Naive thymus-derived CD4-positive, alpha-beta T cell (primary cell): ENCODE measurements at regions of chr13 and their contacts with region 1.

Region 1: GRCh38 chr13:41222259-41222852 is 28.0 kb upstream of the KBTBD7 start:
- DNase-seq: peak in 8 of 9 donors; percentile 32 to 61 (median 53)
- ATAC-seq: peak; percentile 94
- H3K4me3 ChIP-seq: no peak overlapping the region
- H3K4me3 Mint-ChIP-seq: no peak overlapping the region
- H3K27ac ChIP-seq: no peak overlapping the region
- H3K27ac Mint-ChIP-seq: no peak overlapping the region
- H3K4me1 ChIP-seq: no peaks in the 10 kb centered on the region
- H3K4me1 Mint-ChIP-seq: peaks cover 0 to 4% (median 0%) of the 10 kb centered on the region in 7 donors
- H3K27me3 ChIP-seq: no peaks in the 10 kb centered on the region
- H3K27me3 Mint-ChIP-seq: no peaks in the 10 kb centered on the region

Region 2: DNA sequence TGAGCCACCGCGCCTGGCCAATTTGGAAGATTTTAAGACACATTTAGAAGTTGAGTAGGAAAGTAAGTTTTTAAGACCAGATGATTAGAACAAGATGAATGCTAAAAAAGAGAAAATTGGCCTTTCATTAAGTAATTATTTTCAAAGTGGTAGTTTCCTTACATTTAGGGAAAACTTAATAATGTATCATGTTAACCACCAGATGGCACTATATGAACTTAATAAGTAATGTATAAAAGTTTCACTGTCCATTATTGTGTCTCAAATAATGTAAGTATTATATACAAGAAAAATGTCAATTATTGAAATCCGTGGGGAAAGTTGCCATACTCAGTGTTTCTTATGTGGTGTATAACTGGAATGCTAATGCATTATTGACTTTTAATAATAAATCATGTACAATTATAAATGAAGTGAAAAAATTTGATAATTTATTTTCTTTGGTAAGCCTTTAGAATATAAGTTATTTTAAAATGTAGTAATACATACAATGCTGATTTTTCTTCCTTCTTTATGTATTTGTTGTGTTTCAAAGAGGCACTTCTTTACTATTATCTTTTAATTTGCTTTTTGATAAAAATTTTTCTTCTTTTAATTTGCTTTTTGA is 1537.7 kb before region 1 on chr13:
- CTCF ChIA-PET with region 1: interaction called, 4 read pairs
- POLR2A ChIA-PET with region 1: no interaction called
- intact Hi-C with region 1: loop called in 1 of 2 experiments (anchors 2 kb)
- DNase-seq: peak in 6 of 9 donors; percentile 6 to 44 (median 34)
- ATAC-seq: peak; percentile 53
- H3K4me3 ChIP-seq: no peak overlapping the region
- H3K4me3 Mint-ChIP-seq: no peak overlapping the region
- H3K27ac ChIP-seq: no peak overlapping the region
- H3K27ac Mint-ChIP-seq: no peak overlapping the region
- H3K4me1 ChIP-seq: no peaks in the 10 kb centered on the region
- H3K4me1 Mint-ChIP-seq: peaks cover 0 to 20% (median 3%) of the 10 kb centered on the region in 7 donors
- H3K27me3 ChIP-seq: no peaks in the 10 kb centered on the region
- H3K27me3 Mint-ChIP-seq: no peaks in the 10 kb centered on the region

Region 3: DNA sequence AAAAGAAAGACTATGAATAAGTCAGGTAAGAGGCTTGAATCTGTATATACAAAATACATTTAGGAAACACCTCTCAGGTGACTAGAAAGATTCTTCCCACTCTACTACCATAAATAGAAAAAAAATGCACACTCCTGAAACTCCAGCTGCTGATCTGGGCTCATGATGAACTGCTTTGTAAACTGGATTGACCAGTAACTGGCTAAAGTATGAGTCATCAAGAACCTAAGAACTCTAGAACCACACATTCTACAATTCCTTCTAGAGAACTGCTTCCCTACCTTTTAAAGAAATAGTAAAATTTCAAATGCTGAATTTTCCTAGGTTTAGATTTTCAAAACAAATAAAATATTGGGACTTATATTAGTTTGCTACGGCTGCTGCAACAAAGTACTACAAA is 258.4 kb before region 1 on chr13:
- CTCF ChIA-PET with region 1: no interaction called
- POLR2A ChIA-PET with region 1: no interaction called
- intact Hi-C with region 1: loop called in 1 of 2 experiments (anchors 2 kb)
- DNase-seq: no peak
- ATAC-seq: peak; percentile 38
- H3K4me3 ChIP-seq: no peak overlapping the region
- H3K4me3 Mint-ChIP-seq: peak overlapping the region in 9 of 10 donors; percentile 4 to 88 (median 35)
- H3K27ac ChIP-seq: no peak overlapping the region
- H3K27ac Mint-ChIP-seq: peak overlapping the region in 4 of 9 donors; percentile 44 to 83 (median 76)
- H3K4me1 ChIP-seq: peaks cover 40 to 62% of the 10 kb centered on the region in 2 donors
- H3K4me1 Mint-ChIP-seq: peaks cover 65 to 95% (median 89%) of the 10 kb centered on the region in 7 donors
- H3K27me3 ChIP-seq: no peaks in the 10 kb centered on the region
- H3K27me3 Mint-ChIP-seq: no peaks in the 10 kb centered on the region

Region 4: GRCh38 chr13:41054212-41054877 is 168.0 kb before region 1 on chr13:
- CTCF ChIA-PET with region 1: interaction called, 17 read pairs
- POLR2A ChIA-PET with region 1: no interaction called
- intact Hi-C with region 1: loop called (anchors 1 kb)
- DNase-seq: peak in 7 of 9 donors; percentile 42 to 70 (median 56)
- ATAC-seq: peak; percentile 59
- H3K4me3 ChIP-seq: no peak overlapping the region
- H3K4me3 Mint-ChIP-seq: peak overlapping the region in 7 of 10 donors; percentile 14 to 68 (median 48)
- H3K27ac ChIP-seq: peak overlapping the region; percentile 5
- H3K27ac Mint-ChIP-seq: peak overlapping the region in 7 of 9 donors; percentile 2 to 73 (median 59)
- H3K4me1 ChIP-seq: peaks cover 0 to 12% of the 10 kb centered on the region in 2 donors
- H3K4me1 Mint-ChIP-seq: peaks cover 40 to 64% (median 54%) of the 10 kb centered on the region in 7 donors
- H3K27me3 ChIP-seq: no peaks in the 10 kb centered on the region
- H3K27me3 Mint-ChIP-seq: no peaks in the 10 kb centered on the region

Region 5: GRCh38 chr13:41075034-41075433 is 147.3 kb before region 1 on chr13:
- CTCF ChIA-PET with region 1: no interaction called
- POLR2A ChIA-PET with region 1: no interaction called
- intact Hi-C with region 1: loop called (anchors 1 kb)
- DNase-seq: peak in 7 of 9 donors; percentile 15 to 58 (median 51)
- ATAC-seq: peak; percentile 63
- H3K4me3 ChIP-seq: no peak overlapping the region
- H3K4me3 Mint-ChIP-seq: no peak overlapping the region
- H3K27ac ChIP-seq: no peak overlapping the region
- H3K27ac Mint-ChIP-seq: no peak overlapping the region
- H3K4me1 ChIP-seq: no peaks in the 10 kb centered on the region
- H3K4me1 Mint-ChIP-seq: no peaks in the 10 kb centered on the region
- H3K27me3 ChIP-seq: no peaks in the 10 kb centered on the region
- H3K27me3 Mint-ChIP-seq: no peaks in the 10 kb centered on the region